ENCODE measurements at regions of chr1 and their contacts with region 1.

Region 1: GRCh38 chr1:160951443-160952128 is 3.0 kb downstream of the ITLN2 start:
- DNase-seq: peak; percentile 86
- H3K4me3 Mint-ChIP-seq: no peak overlapping the region
- H3K27ac Mint-ChIP-seq: no peak overlapping the region
- H3K4me1 Mint-ChIP-seq: peaks cover 13% of the 10 kb centered on the region
- H3K27me3 Mint-ChIP-seq: peaks cover 10% of the 10 kb centered on the region

Region 2: DNA sequence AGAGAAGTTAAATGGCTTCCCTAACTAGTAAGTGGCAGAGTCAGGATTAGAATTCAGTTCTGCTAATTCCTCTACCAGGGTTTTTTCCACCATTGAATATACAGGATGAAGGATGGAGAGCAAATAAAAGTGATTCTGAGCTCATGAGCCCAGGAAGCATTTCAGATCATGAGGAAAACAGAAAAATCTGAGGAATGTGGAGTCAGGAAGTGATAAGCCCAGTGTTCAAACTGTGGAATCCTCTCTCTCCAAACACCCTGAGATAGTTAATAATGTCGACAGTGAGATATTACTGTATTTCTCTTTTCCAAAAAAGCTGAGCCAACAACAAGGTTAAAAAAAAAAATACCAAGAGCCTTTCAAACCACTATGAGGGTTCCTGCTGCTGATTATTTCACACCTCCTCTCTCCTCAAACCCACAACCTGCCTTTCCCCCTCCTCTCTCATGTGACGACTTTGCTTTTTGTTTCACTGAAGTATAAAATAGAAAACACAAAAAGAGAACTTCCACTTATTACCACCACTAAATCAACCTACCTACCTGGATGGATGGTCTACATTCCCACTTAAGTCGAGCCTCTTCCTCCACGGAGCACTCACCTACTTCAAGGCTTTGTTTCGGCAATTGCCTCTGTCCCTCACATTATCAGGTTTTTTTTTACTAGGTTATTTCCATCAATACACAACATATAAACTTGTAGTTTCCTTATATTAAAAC is 313.6 kb before region 1 on chr1:
- CTCF ChIA-PET with region 1: no interaction called
- DNase-seq: peak; percentile 70
- H3K4me3 Mint-ChIP-seq: peak overlapping the region; percentile 68
- H3K27ac Mint-ChIP-seq: peak overlapping the region; percentile 94
- H3K4me1 Mint-ChIP-seq: peaks cover 96% of the 10 kb centered on the region
- H3K27me3 Mint-ChIP-seq: no peaks in the 10 kb centered on the region

Region 3: GRCh38 chr1:160726498-160727315 is 224.9 kb before region 1 on chr1:
- CTCF ChIA-PET with region 1: interaction called, 97 read pairs
- DNase-seq: peak; percentile 75
- H3K4me3 Mint-ChIP-seq: no peak overlapping the region
- H3K27ac Mint-ChIP-seq: no peak overlapping the region
- H3K4me1 Mint-ChIP-seq: peaks cover 22% of the 10 kb centered on the region
- H3K27me3 Mint-ChIP-seq: no peaks in the 10 kb centered on the region

Region 4: GRCh38 chr1:160795951-160796383 is 155.6 kb before region 1 on chr1 and contains the start of gene LY9:
- CTCF ChIA-PET with region 1: interaction called, 20 read pairs
- DNase-seq: peak; percentile 89
- H3K4me3 Mint-ChIP-seq: peak within 1 kb of the TSS; percentile 96
- H3K27ac Mint-ChIP-seq: peak within 1 kb of the TSS; percentile 99
- H3K4me1 Mint-ChIP-seq: peaks cover 63% of the 10 kb centered on the region
- H3K27me3 Mint-ChIP-seq: no peaks in the 10 kb centered on the region

Region 5: GRCh38 chr1:160830321-160831153 is 121.0 kb before region 1 on chr1:
- CTCF ChIA-PET with region 1: interaction called, 288 read pairs
- DNase-seq: peak; percentile 88
- H3K4me3 Mint-ChIP-seq: no peak overlapping the region
- H3K27ac Mint-ChIP-seq: no peak overlapping the region
- H3K4me1 Mint-ChIP-seq: peaks cover 26% of the 10 kb centered on the region
- H3K27me3 Mint-ChIP-seq: no peaks in the 10 kb centered on the region

Region 6: GRCh38 chr1:160963521-160963920 is 11.9 kb after region 1 on chr1:
- CTCF ChIA-PET with region 1: interaction called, 14 read pairs
- DNase-seq: no peak
- H3K4me3 Mint-ChIP-seq: no peak overlapping the region
- H3K27ac Mint-ChIP-seq: no peak overlapping the region
- H3K4me1 Mint-ChIP-seq: no peaks in the 10 kb centered on the region
- H3K27me3 Mint-ChIP-seq: peaks cover 11% of the 10 kb centered on the region

Region 7: DNA sequence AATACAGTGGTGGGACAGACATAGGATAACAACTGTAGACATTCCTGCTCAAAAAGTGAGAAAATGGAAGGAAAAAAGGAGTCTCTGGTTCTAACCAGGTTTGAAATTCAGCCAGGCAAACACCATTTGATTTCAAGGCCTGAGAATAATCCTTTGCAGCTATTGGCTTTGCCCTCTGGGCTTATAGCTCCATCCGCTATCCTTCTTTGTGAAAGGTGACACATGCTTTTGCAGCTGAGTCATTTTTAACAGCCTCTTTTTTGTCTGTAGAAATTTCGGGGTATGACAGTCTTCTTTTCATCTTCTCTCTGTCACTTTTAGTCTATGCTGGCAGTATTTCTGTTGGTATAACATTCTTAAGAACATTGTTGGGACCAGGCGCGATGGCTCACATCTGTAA is 378.8 kb after region 1 on chr1:
- CTCF ChIA-PET with region 1: no interaction called
- DNase-seq: no peak
- H3K4me3 Mint-ChIP-seq: no peak overlapping the region
- H3K27ac Mint-ChIP-seq: no peak overlapping the region
- H3K4me1 Mint-ChIP-seq: no peaks in the 10 kb centered on the region
- H3K27me3 Mint-ChIP-seq: no peaks in the 10 kb centered on the region